T-cell (primary cell): ENCODE measurements at regions of chr6 and their contacts with region 1.

Region 1: DNA sequence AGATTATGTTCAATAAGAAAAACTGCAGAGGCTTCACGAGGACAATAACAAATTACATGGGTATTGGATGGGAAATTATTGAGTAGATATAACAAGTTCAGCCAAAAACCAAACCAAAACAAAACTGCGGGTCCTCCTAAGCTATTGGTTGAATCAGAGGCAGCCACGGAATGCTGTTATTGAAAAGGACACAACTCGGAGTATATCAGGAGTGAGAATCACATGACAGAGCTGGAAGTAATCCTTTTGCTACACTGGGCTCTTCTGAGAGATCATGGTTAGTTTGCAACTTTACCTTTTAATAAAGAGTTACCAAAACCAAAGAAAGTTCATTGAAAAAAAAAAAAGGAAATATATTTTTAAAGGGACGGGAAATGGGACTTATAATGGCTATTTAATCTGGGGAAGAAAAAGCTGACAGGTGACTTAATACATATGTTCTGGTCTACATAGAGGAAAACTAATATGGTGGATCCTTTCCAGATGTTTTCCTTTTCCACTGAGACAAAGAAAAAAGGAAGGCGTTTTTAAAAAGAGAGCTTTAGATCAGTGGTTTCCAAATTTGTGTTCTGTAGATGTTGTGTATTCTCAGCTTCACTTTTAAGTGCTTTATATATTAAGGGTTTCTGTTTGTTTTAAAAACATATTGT is 6.9 kb upstream of the CITED2 start:
- DNase-seq: no peak
- ATAC-seq: no peak
- H3K4me3 ChIP-seq: no peak overlapping the region
- H3K4me3 Mint-ChIP-seq: no peak overlapping the region
- H3K27ac ChIP-seq: no peak overlapping the region
- H3K27ac Mint-ChIP-seq: no peak overlapping the region
- H3K4me1 ChIP-seq: peaks cover 0 to under 1% of the 10 kb centered on the region in 2 experiments
- H3K4me1 Mint-ChIP-seq: peaks cover 3 to 5% (median 3%) of the 10 kb centered on the region in 3 donors
- H3K27me3 ChIP-seq: no peaks in the 10 kb centered on the region
- H3K27me3 Mint-ChIP-seq: no peaks in the 10 kb centered on the region

Region 2: DNA sequence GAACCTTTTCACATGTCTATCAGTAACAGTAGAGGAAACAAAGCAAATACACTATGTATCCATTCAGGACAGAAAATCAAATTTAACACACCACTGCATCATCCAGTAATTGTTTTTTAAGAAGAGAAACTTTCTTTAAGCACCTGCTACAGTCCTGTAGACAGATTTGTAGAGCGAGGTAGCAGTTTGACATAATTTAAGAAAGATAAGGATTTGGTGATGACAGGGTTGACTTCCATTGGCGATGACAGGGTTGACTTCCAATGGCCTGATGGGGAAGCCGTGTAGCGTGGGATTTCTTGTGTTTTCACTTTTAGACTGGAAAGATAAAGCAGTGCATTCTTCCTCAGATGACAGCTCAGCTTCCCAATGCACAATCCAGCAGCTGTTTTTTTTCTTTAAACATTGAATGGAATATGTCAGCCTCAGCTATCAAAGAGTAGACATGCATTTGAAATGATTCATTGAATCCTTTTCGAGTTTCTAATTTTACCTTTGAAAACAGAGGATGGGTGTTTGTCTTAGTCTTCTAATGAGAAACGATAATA is 516.9 kb before region 1 on chr6:
- CTCF ChIA-PET with region 1: no interaction called
- POLR2A ChIA-PET with region 1: interaction called in 1 of 2 experiments, 12 read pairs
- DNase-seq: no peak
- ATAC-seq: no peak
- H3K4me3 ChIP-seq: no peak overlapping the region
- H3K4me3 Mint-ChIP-seq: no peak overlapping the region
- H3K27ac ChIP-seq: no peak overlapping the region
- H3K27ac Mint-ChIP-seq: no peak overlapping the region
- H3K4me1 ChIP-seq: no peaks in the 10 kb centered on the region
- H3K4me1 Mint-ChIP-seq: no peaks in the 10 kb centered on the region
- H3K27me3 ChIP-seq: peaks cover 0 to 8% of the 10 kb centered on the region in 2 experiments
- H3K27me3 Mint-ChIP-seq: peaks cover 11 to 17% of the 10 kb centered on the region in 2 donors